ENCODE measurements at regions of chrX and their contacts with region 1.

Region 1: DNA sequence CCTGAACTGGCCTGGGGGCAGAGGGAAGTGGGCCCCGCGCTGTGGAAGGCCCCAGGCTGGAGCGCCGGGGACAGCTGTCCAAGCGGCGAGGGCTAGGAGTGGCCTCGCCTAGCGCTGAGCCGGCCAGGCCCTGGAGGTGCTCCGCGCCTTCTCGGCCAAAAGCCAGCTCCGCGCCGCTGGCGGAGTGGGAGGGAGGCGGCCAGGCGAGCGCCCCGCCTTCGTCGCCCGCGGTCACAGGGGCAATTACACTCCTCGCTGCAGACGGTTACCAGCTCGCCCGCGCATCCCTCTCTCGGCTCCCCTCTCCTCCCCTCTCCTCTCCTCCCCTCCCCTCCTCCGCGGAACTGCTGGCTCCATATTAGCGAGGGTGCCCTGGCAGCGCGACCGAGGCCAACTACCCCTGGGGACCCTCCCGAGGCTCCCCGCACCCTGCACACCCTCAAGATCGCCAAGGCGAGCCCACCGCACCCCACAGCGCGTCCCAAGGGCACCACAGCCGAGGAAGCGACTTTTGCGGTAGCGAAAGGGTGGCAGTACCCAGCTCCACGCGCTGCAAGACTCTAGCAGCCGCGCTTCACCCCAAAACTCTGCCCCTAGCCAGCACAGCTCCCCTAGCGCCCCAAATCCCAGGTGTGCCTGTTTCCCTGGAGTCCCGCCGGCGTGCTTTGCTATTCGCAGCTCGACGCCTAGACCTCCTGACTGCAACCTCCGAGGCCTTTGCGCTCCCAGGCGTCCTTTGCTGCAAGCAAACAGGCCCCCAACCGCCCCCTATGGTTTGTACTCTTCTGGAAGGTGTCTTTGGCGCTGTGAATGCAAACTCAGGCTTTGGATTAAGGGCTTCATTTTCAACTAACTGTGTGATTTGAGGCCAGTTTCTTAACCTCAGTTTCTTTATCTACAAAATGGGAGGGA is 91.4 kb downstream of the BCOR start:
- DNase-seq: peak in 5 of 14 experiments; percentile 0 to 51 (median 38)
- ATAC-seq: peak; percentile 29
- H3K4me3 ChIP-seq: peak overlapping the region; percentile 19
- H3K4me3 Mint-ChIP-seq: peak overlapping the region; percentile 78
- H3K27ac ChIP-seq: no peak overlapping the region
- H3K27ac Mint-ChIP-seq: no peak overlapping the region
- H3K4me1 ChIP-seq: peaks cover 48% of the 10 kb centered on the region
- H3K4me1 Mint-ChIP-seq: peaks cover 30% of the 10 kb centered on the region
- H3K27me3 ChIP-seq: peaks cover 20 to 33% of the 10 kb centered on the region in 2 experiments
- H3K27me3 Mint-ChIP-seq: peaks cover 55% of the 10 kb centered on the region
- CTCF ChIP-seq: no peak

Region 2: GRCh38 chrX:40083120-40083978 is 77.0 kb after region 1 on chrX:
- CTCF ChIA-PET with region 1: no interaction called
- POLR2A ChIA-PET with region 1: no interaction called
- intact Hi-C with region 1: loop called (anchors 5 to 10 kb)
- DNase-seq: peak in 2 of 14 experiments; percentile 38 to 40
- ATAC-seq: peak; percentile 51
- H3K4me3 ChIP-seq: peak overlapping the region; percentile 51
- H3K4me3 Mint-ChIP-seq: peak overlapping the region; percentile 89
- H3K27ac ChIP-seq: no peak overlapping the region
- H3K27ac Mint-ChIP-seq: peak overlapping the region; percentile 36
- H3K4me1 ChIP-seq: peaks cover 71% of the 10 kb centered on the region
- H3K4me1 Mint-ChIP-seq: peaks cover 58% of the 10 kb centered on the region
- H3K27me3 ChIP-seq: no peaks in the 10 kb centered on the region
- H3K27me3 Mint-ChIP-seq: no peaks in the 10 kb centered on the region
- CTCF ChIP-seq: no peak

Region 3: DNA sequence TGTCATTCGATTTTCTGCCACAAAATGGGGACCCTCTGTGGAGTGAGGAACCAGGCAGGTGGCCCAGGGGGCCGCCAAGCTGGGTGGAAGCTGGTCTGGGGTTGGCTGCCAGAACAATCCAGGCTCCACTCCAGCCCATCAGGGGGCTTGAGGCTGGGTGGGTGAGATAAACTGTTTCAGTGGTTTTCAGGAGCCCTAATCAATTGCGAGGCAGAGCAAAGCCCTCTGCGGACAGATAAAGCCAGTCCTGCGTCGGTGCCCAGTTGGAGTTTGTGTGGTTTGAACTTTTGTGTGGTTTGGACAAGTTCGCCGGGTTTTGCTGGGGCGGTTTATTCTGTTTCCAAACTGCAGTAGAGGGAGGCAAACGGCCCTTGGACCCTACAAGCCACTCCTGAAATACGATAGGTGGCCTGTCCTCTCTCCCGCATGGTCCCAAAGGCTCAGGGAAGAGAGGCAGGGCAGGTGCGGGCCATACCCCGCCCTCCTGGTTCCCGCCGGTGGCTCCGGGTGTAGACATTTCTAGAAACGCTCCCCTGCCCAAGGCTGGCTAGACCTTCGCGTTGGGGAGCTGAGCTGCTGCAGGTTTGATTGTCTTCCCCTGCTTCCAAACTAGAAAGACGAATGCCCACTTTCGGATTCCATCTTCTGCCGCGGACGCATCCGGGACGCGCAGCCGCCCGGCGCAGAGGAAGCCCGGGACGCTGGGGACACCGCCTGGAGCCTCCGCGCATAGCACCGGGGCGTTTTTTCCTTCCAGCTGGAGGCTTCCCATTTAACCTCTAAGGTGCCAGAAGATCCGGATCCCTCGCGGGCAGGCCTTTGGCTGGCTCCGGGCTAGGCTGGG is 260.4 kb after region 1 on chrX:
- CTCF ChIA-PET with region 1: no interaction called
- POLR2A ChIA-PET with region 1: no interaction called
- intact Hi-C with region 1: loop called in 1 of 2 experiments (anchors 10 kb)
- DNase-seq: peak; percentile 15 to 74 (median 42)
- ATAC-seq: peak; percentile 83
- H3K4me3 ChIP-seq: peak overlapping the region; percentile 67
- H3K4me3 Mint-ChIP-seq: peak overlapping the region; percentile 85
- H3K27ac ChIP-seq: no peak overlapping the region
- H3K27ac Mint-ChIP-seq: no peak overlapping the region
- H3K4me1 ChIP-seq: peaks cover 14% of the 10 kb centered on the region
- H3K4me1 Mint-ChIP-seq: peaks cover 6% of the 10 kb centered on the region
- H3K27me3 ChIP-seq: no peaks in the 10 kb centered on the region
- H3K27me3 Mint-ChIP-seq: no peaks in the 10 kb centered on the region
- CTCF ChIP-seq: peak; percentile 67